ENCODE measurements at regions of chr10 and their contacts with region 1.

Region 1: DNA sequence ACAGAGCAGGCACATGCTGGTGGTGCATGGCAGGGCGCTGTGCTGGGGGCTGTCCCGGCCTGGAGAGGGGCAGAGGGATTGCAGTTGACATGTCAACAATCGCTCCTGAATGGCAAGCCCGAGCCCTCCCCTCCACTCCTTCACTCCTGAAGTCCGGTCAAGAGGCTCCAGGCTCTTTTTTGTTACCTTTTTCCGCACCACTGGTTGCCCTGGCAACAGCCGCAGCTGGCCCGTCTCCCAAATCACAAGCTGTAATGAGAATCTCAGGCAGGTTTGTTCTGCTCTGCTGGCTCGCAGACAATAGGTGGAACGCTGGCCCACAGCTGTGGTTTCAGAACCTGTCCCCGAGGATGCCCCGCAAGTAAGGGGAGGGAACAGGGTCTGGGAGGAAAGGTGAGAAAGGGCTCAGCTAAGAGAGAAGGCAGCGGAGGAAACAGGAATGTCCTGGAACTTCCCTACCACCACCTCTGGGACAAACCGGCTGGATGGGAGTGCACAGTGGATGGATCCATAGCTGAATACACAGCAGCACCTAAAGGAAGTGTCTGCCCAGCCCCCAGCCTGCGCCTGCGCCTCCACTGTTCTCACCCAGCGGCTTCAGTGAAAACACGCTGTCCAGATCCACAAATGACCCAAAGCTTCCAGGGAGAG is 58.9 kb downstream of the CALML3 start:
- DNase-seq: peak; percentile 94 to 96
- H3K4me3 ChIP-seq: peak overlapping the region; percentile 41; the same call in 1 of the 2 replicates
- H3K27ac ChIP-seq: peak overlapping the region; percentile 99
- H3K4me1 ChIP-seq: peaks cover 82% of the 10 kb centered on the region
- H3K27me3 ChIP-seq: no peaks in the 10 kb centered on the region
- CTCF ChIP-seq: no peak

Region 2: GRCh38 chr10:5446390-5446926 is 137.2 kb before region 1 on chr10:
- CTCF ChIA-PET with region 1: no interaction called
- POLR2A ChIA-PET with region 1: interaction called, 6 read pairs
- intact Hi-C with region 1: loop called (anchors 1 kb)
- DNase-seq: peak; percentile 87 to 95
- H3K4me3 ChIP-seq: peak overlapping the region; percentile 91
- H3K27ac ChIP-seq: peak overlapping the region; percentile 95
- H3K4me1 ChIP-seq: peaks cover 38% of the 10 kb centered on the region
- H3K27me3 ChIP-seq: no peaks in the 10 kb centered on the region
- CTCF ChIP-seq: no peak

Region 3: GRCh38 chr10:5466418-5467154 is 117.1 kb before region 1 on chr10:
- CTCF ChIA-PET with region 1: no interaction called
- POLR2A ChIA-PET with region 1: no interaction called
- intact Hi-C with region 1: loop called (anchors 1 kb)
- DNase-seq: peak; percentile 86 to 87
- H3K4me3 ChIP-seq: peak overlapping the region; percentile 42; the same call in 1 of the 2 replicates
- H3K27ac ChIP-seq: peak overlapping the region; percentile 91
- H3K4me1 ChIP-seq: peaks cover 30% of the 10 kb centered on the region
- H3K27me3 ChIP-seq: no peaks in the 10 kb centered on the region
- CTCF ChIP-seq: no peak

Region 4: GRCh38 chr10:5488309-5489167 is 95.1 kb before region 1 on chr10:
- CTCF ChIA-PET with region 1: no interaction called
- POLR2A ChIA-PET with region 1: interaction called, 3 read pairs
- intact Hi-C with region 1: loop called (anchors 1 kb)
- DNase-seq: peak; percentile 94 to 97
- H3K4me3 ChIP-seq: peak overlapping the region; percentile 45; the same call in 1 of the 2 replicates
- H3K27ac ChIP-seq: peak overlapping the region; percentile 98
- H3K4me1 ChIP-seq: peaks cover 37% of the 10 kb centered on the region
- H3K27me3 ChIP-seq: no peaks in the 10 kb centered on the region
- CTCF ChIP-seq: 0 out of 2 replicates have a peak, but pooled peaks have one; percentile 16

Region 5: GRCh38 chr10:5605040-5605360 is 21.4 kb after region 1 on chr10:
- CTCF ChIA-PET with region 1: interaction called, 9 read pairs
- POLR2A ChIA-PET with region 1: interaction called, 21 read pairs
- intact Hi-C with region 1: no loop called
- DNase-seq: no peak
- H3K4me3 ChIP-seq: no peak overlapping the region
- H3K27ac ChIP-seq: no peak overlapping the region
- H3K4me1 ChIP-seq: peaks cover 23% of the 10 kb centered on the region
- H3K27me3 ChIP-seq: no peaks in the 10 kb centered on the region
- CTCF ChIP-seq: no peak

Region 6: DNA sequence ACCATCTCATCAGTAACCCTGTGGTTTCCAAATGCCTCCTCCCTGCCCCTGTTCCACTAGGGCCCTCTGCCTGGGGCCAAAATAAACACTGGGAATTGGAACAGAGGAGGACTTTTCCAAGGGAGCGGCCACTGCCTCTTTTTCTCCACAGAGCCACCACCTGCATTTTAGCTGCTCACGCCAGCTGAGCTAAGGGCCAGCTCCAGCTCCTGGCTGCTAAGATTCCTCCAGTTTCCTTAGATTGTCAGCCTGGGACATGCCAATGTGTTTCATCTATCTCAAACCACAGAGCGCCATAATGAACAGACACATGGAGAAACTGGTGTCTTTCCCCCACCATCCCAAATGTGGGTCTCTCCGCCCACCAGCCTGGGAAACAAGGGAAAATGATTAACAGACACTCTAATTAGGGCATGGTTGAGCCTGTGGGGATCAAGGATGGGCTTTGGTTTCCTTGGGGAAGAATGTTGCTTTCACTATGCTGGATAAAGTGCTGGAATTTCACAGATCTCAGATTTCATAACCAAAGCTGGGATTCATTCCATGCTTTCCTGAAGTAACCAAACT is 30.6 kb after region 1 on chr10:
- CTCF ChIA-PET with region 1: no interaction called
- POLR2A ChIA-PET with region 1: interaction called, 4 read pairs
- intact Hi-C with region 1: loop called (anchors 1 kb)
- DNase-seq: no peak
- H3K4me3 ChIP-seq: no peak overlapping the region
- H3K27ac ChIP-seq: no peak overlapping the region
- H3K4me1 ChIP-seq: peaks cover 49% of the 10 kb centered on the region
- H3K27me3 ChIP-seq: no peaks in the 10 kb centered on the region
- CTCF ChIP-seq: no peak

Region 7: GRCh38 chr10:5623081-5623748 is 39.6 kb after region 1 on chr10:
- CTCF ChIA-PET with region 1: interaction called, 6 read pairs
- POLR2A ChIA-PET with region 1: interaction called, 4 read pairs
- intact Hi-C with region 1: loop called (anchors 1 kb)
- DNase-seq: peak; percentile 83 to 93
- H3K4me3 ChIP-seq: no peak overlapping the region
- H3K27ac ChIP-seq: peak overlapping the region; percentile 77
- H3K4me1 ChIP-seq: peaks cover 20% of the 10 kb centered on the region
- H3K27me3 ChIP-seq: no peaks in the 10 kb centered on the region
- CTCF ChIP-seq: peak; percentile 84